ENCODE measurements at regions of chr5 and their contacts with region 1.

Region 1: GRCh38 chr5:54310433-54311175 is at the start of gene ARL15:
- DNase-seq: peak; percentile 95 to 99 (median 98)
- ATAC-seq: peak; percentile 91 to 94 (median 92)
- H3K4me3 ChIP-seq: peak within 1 kb of the TSS; percentile 89 to 93
- H3K4me3 Mint-ChIP-seq: peak within 1 kb of the TSS; percentile 96
- H3K27ac ChIP-seq: peak within 1 kb of the TSS; percentile 66
- H3K27ac Mint-ChIP-seq: peak within 1 kb of the TSS; percentile 94 to 97
- H3K4me1 ChIP-seq: peaks cover 7 to 13% of the 10 kb centered on the region in 2 experiments
- H3K4me1 Mint-ChIP-seq: peaks cover 29 to 33% (median 31%) of the 10 kb centered on the region in 3 donors
- H3K27me3 ChIP-seq: no peaks in the 10 kb centered on the region
- H3K27me3 Mint-ChIP-seq: peaks cover under 1 to 4% of the 10 kb centered on the region in 2 donors
- total RNA-seq, gene ARL15: 10.7 to 21.6 (median 11.7) TPM

Region 2: GRCh38 chr5:52811067-52811749 is 1499.4 kb before region 1 on chr5:
- CTCF ChIA-PET with region 1: no interaction called
- POLR2A ChIA-PET with region 1: interaction called in 1 of 2 experiments, 17 read pairs
- DNase-seq: no peak
- ATAC-seq: no peak
- H3K4me3 ChIP-seq: no peak overlapping the region
- H3K4me3 Mint-ChIP-seq: no peak overlapping the region
- H3K27ac ChIP-seq: no peak overlapping the region
- H3K27ac Mint-ChIP-seq: no peak overlapping the region
- H3K4me1 ChIP-seq: no peaks in the 10 kb centered on the region
- H3K4me1 Mint-ChIP-seq: peaks cover 0 to 4% (median 2%) of the 10 kb centered on the region in 3 donors
- H3K27me3 ChIP-seq: no peaks in the 10 kb centered on the region
- H3K27me3 Mint-ChIP-seq: no peaks in the 10 kb centered on the region

Region 3: DNA sequence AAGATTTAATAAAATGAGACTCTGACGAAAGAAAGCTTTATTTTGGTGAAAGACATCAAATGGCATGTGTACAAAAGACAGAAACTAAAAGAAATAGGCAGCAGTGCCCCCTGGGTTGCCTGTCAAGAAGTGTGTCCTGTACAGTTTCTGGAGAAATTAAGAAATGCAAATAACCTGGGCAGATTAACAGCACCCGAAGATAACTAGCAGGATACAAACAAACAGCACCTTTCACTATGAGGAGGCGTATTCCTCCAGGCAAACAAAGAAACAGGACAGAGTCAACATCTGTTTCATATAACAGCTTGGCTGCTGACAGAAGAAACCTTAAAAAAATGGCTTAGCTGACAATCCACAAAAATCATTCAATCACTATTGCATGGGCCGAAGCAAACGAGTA is 162.5 kb before region 1 on chr5:
- CTCF ChIA-PET with region 1: no interaction called
- POLR2A ChIA-PET with region 1: no interaction called
- DNase-seq: no peak
- ATAC-seq: no peak
- H3K4me3 ChIP-seq: no peak overlapping the region
- H3K4me3 Mint-ChIP-seq: no peak overlapping the region
- H3K27ac ChIP-seq: no peak overlapping the region
- H3K27ac Mint-ChIP-seq: no peak overlapping the region
- H3K4me1 ChIP-seq: no peaks in the 10 kb centered on the region
- H3K4me1 Mint-ChIP-seq: no peaks in the 10 kb centered on the region
- H3K27me3 ChIP-seq: no peaks in the 10 kb centered on the region
- H3K27me3 Mint-ChIP-seq: no peaks in the 10 kb centered on the region

Region 4: GRCh38 chr5:54298947-54299346 is 11.7 kb before region 1 on chr5:
- CTCF ChIA-PET with region 1: interaction called in 1 of 2 experiments, 10 read pairs
- POLR2A ChIA-PET with region 1: interaction called in 1 of 2 experiments, 4 read pairs
- DNase-seq: no peak
- ATAC-seq: no peak
- H3K4me3 ChIP-seq: no peak overlapping the region
- H3K4me3 Mint-ChIP-seq: no peak overlapping the region
- H3K27ac ChIP-seq: no peak overlapping the region
- H3K27ac Mint-ChIP-seq: no peak overlapping the region
- H3K4me1 ChIP-seq: peaks cover 0 to 11% of the 10 kb centered on the region in 2 experiments
- H3K4me1 Mint-ChIP-seq: peaks cover 60 to 75% (median 65%) of the 10 kb centered on the region in 3 donors
- H3K27me3 ChIP-seq: no peaks in the 10 kb centered on the region
- H3K27me3 Mint-ChIP-seq: no peaks in the 10 kb centered on the region

Region 5: DNA sequence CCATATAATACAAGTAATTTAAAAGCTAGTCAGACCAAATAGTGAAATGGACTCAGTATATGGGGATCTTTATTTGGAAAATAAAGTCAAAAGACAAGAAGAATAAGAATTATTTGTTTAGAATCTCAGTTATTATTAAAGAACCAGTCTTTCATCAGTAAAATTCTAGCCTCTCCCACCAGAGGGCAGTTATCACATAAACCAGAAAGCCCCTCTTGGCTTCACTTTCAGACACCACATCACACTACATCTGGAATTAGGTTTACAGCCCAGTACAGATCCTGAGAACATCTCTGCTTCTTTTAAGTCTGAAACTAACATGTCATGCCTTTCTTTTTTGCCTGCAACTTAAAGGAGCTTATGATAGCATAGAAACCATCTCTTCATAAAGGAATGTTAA is 132.7 kb after region 1 on chr5:
- CTCF ChIA-PET with region 1: interaction called in 1 of 2 experiments, 3 read pairs
- POLR2A ChIA-PET with region 1: interaction called in 1 of 2 experiments, 10 read pairs
- DNase-seq: peak in 1 of 35 experiments; percentile 22
- ATAC-seq: no peak
- H3K4me3 ChIP-seq: no peak overlapping the region
- H3K4me3 Mint-ChIP-seq: no peak overlapping the region
- H3K27ac ChIP-seq: no peak overlapping the region
- H3K27ac Mint-ChIP-seq: no peak overlapping the region
- H3K4me1 ChIP-seq: peaks cover 9 to 13% of the 10 kb centered on the region in 2 experiments
- H3K4me1 Mint-ChIP-seq: peaks cover 15 to 20% (median 19%) of the 10 kb centered on the region in 3 donors
- H3K27me3 ChIP-seq: peaks cover 0 to 2% of the 10 kb centered on the region in 2 experiments
- H3K27me3 Mint-ChIP-seq: no peaks in the 10 kb centered on the region

Region 6: GRCh38 chr5:54820346-54821134 is 509.9 kb after region 1 on chr5:
- CTCF ChIA-PET with region 1: interaction called in 1 of 2 experiments, 12 read pairs
- POLR2A ChIA-PET with region 1: no interaction called
- DNase-seq: no peak
- ATAC-seq: no peak
- H3K4me3 ChIP-seq: no peak overlapping the region
- H3K4me3 Mint-ChIP-seq: no peak overlapping the region
- H3K27ac ChIP-seq: no peak overlapping the region
- H3K27ac Mint-ChIP-seq: no peak overlapping the region
- H3K4me1 ChIP-seq: no peaks in the 10 kb centered on the region
- H3K4me1 Mint-ChIP-seq: no peaks in the 10 kb centered on the region
- H3K27me3 ChIP-seq: no peaks in the 10 kb centered on the region
- H3K27me3 Mint-ChIP-seq: peaks cover 3% of the 10 kb centered on the region in 2 donors